GM12878 (cell line): ENCODE measurements at regions of chr3 and their contacts with region 1.

Region 1: GRCh38 chr3:7779331-7779730 is 722.3 kb upstream of the LMCD1 start:
- DNase-seq: no peak
- ATAC-seq: no peak
- H3K4me3 ChIP-seq: no peak overlapping the region
- H3K27ac ChIP-seq: no peak overlapping the region
- H3K4me1 ChIP-seq: no peaks in the 10 kb centered on the region
- H3K27me3 ChIP-seq: no peaks in the 10 kb centered on the region
- CTCF ChIP-seq: no peak
- EP300 ChIP-seq: no peak
- POLR2A ChIP-seq: no peak
- RAD21 ChIP-seq: no peak

Region 2: DNA sequence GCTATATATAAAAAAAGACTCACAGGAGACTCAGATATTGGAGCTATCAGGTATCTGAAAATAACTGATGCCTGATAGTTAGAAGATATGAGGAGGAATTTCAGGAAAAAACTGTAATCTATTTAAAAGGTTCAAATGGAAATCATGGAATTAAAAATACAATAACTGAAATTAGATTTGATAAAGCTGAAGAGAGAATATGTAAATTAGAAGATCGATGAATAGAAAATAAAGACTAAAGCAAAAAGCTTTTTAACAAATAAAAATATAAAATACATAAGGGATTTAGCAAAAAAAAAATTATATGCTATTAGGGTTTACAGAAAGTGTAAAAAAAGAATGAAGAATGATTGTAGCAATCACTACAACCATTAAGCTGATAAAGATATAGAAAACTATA is 42.5 kb after region 1 on chr3:
- CTCF ChIA-PET with region 1: no interaction called
- POLR2A ChIA-PET with region 1: no interaction called
- RAD21 ChIA-PET with region 1: no interaction called
- SMC1A ChIA-PET with region 1: no interaction called
- in situ Hi-C with region 1: no loop called
- intact Hi-C with region 1: loop called (anchors 5 kb)
- DNase-seq: no peak
- ATAC-seq: no peak
- H3K4me3 ChIP-seq: no peak overlapping the region
- H3K27ac ChIP-seq: no peak overlapping the region
- H3K4me1 ChIP-seq: no peaks in the 10 kb centered on the region
- H3K27me3 ChIP-seq: no peaks in the 10 kb centered on the region
- CTCF ChIP-seq: no peak
- EP300 ChIP-seq: no peak
- POLR2A ChIP-seq: no peak
- RAD21 ChIP-seq: no peak